GM13976 (cell line): ENCODE measurements at regions of chr14 and their contacts with region 1.

Region 1: DNA sequence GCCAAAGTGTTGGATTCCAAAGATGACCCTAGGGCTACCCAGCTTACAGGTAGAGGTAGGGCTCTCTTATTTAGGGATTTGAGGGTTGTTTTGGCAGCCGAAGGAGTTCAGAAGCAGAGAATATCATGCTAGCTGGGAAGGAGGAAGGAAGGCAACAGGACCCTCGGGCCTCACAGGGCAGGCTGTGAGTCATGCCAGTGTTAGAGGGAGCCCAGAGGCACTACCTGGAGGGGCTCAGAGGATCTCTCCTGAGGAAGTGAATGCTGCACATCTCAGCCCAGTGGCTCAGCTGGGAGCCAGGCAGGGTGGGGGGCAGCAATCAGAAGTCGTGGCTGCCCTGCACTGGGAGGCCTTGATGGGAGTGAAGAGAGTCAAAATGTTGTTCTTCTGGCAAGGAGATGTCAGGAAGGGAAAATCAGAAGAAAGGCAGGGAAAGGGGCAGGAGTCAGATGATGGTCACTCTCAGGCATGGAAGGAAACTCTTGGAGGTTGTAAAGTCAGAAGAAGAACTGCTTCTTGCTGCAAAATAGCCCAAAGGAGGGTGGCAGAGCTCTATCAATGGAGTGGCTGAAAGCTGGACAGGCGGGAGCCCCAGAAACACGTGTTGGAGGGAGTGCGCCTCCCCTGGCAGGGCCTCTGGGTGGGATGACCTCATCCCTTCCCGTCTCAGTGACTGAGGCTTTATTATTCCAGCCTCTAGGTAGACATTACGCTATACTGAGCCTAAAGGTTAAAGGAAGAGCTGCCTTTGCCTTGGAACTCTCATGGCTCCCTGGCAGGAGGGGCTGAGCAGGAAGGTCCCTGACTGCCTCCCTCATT is 141.3 kb downstream of the SMOC1 start:
- DNase-seq: no peak
- CTCF ChIP-seq: no peak

Region 2: DNA sequence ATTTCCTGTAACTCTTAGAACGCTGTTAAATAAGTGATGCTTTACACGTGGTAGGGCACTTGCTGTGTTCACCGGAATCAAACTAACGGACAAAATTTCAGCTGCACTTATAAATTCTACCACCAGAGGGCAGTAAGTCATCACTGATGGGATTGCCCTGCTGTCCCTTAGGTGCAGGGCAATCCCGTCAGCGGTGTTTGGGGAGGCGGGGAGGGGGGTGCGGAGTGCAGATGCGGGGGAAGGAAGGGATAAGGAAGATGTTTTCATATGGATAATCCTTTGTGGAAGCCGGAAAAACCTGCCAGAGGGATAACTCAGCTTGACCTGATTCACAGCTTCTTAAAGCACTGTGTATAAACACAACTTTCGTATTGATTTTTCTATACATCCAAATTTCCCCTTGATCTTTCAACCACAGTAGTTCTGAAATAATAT is 201.8 kb before region 1 on chr14:
- in situ Hi-C with region 1: loop called (anchors 5 kb)
- DNase-seq: peak; percentile 76
- CTCF ChIP-seq: peak; percentile 65